ENCODE measurements at regions of chr10 and their contacts with region 1.

Region 1: GRCh38 chr10:77391605-77392235 is 245.9 kb downstream of the KCNMA1 start:
- DNase-seq: peak in 3 of 4 donors; percentile 51 to 79 (median 73)
- ATAC-seq: peak; percentile 78
- H3K4me3 ChIP-seq: no peak overlapping the region
- H3K27ac ChIP-seq: no peak overlapping the region
- H3K4me1 ChIP-seq: no peaks in the 10 kb centered on the region
- H3K27me3 ChIP-seq: peaks cover 0 to 14% of the 10 kb centered on the region in 2 donors
- CTCF ChIP-seq: peak; percentile 36 to 42

Region 2: DNA sequence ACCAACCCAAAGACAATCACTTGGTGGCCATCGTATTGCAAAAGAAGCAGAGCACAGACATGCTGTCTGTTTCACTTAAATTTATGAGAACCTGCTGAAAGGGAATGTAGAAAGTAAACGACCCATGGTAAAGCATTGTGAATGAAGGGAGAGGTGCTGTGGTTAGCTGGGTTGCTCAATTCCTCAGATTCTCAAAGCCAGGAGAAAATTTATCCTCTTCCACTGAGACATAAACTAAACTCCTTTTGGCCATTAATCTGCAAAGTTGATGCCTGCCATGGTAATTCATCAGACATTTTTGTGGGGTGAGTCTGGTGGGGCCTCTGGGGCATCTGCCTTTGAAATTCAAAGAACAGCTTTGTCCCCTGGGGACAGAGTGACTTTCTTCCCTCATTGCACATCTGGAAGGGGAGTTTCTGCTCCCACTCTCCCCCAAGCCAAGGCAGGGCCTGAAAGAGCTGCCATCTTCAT is 1009.3 kb before region 1 on chr10:
- intact Hi-C with region 1: no loop called
- DNase-seq: no peak
- ATAC-seq: no peak
- H3K4me3 ChIP-seq: no peak overlapping the region
- H3K27ac ChIP-seq: no peak overlapping the region
- H3K4me1 ChIP-seq: no peaks in the 10 kb centered on the region
- H3K27me3 ChIP-seq: no peaks in the 10 kb centered on the region
- CTCF ChIP-seq: no peak

Region 3: DNA sequence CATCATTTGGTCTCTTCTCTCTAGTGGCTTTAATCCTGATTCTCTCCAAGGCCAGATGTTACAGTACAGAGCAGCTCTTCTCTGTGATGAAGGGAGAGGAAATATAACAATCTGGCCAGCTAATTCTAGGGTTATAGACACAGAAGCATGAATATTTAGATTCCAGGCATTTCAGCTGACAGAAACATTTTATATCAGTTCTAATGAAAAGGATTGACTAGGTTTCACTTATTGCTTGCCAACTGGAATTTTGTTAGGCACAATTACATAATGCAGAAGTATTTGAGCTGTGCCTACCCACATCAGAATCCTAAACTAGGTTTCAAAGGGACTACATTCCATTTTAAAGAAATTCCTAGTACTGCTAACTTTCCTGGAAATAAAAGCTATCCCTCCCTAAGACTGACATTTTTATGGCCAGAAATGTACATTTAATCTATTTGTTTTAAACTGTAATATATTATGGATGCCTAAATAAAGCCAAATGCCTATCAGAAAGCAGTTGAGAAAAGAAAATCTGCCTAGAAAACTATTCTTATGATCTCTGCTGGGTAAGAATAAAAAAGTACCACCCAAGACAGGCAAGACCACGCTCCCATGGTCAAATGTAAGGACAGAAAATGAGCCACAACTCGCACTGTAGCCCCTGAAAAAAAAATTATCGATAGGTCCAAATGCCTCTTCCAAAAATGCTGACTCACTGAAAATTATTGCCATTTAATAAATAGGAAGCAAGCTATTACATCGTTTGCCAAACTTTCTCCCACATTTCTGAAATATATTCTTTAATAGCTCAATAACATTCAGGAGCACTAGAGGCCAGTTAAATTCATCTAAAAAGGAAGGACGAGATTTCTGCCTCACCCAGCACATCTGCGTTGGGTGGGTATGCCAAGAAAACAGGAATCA is 252.2 kb before region 1 on chr10:
- intact Hi-C with region 1: no loop called
- DNase-seq: peak in 1 of 4 donors; percentile 5
- ATAC-seq: no peak
- H3K4me3 ChIP-seq: no peak overlapping the region
- H3K27ac ChIP-seq: no peak overlapping the region
- H3K4me1 ChIP-seq: no peaks in the 10 kb centered on the region
- H3K27me3 ChIP-seq: no peaks in the 10 kb centered on the region
- CTCF ChIP-seq: no peak

Region 4: GRCh38 chr10:77641788-77642397 is 250.2 kb after region 1 on chr10:
- intact Hi-C with region 1: loop called in 1 of 2 experiments (anchors 10 kb)
- DNase-seq: peak in 2 of 4 donors; percentile 66 to 72
- ATAC-seq: peak; percentile 69
- H3K4me3 ChIP-seq: no peak overlapping the region
- H3K27ac ChIP-seq: no peak overlapping the region
- H3K4me1 ChIP-seq: peaks cover 0 to 12% of the 10 kb centered on the region in 2 donors
- H3K27me3 ChIP-seq: peaks cover 23 to 77% of the 10 kb centered on the region in 2 donors
- CTCF ChIP-seq: peak; percentile 71 to 72